ENCODE measurements at regions of chr2 and their contacts with region 1.

Region 1: DNA sequence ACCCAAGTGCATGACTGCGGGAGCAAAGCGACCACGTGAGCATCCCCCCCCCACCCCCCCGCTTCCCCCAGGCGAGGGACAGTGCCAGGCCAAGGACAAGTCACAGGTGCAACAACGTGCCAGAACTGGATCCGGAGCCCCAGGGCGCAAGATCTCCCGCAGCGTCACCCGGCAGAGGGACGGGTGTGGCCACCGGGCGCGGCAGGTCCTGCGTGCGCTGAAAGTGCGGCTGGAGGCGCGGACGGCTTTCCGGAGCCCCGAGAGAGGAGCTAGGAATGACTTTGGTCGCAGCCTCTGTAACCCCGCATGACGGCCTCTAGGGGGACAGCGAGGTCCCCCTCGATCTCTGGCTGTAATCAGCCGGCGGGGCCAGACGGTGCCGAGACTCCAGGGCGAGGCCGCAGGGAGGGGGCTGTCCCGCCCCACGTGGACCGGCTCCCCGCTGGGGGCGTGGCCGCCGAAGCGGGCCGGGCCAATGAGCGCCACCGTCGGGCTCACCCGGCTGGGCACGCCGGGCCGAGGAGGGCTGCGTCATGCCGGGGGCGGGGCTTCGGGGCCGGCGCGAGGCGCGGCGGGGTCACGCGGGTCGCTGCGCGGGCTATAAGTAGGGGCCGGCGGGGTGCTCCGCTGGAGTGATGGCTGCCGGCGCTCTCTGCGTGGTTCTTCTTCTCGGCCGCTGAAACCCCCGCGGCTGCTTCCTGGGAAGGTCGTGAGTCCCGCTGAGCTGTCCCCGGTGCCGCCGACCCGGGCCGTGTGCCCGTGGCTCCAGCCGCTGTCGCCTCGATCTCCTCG is at the start of gene SLC20A1:
- DNase-seq: peak; percentile 99
- H3K4me3 Mint-ChIP-seq: peak within 1 kb of the TSS; percentile 98
- H3K27ac Mint-ChIP-seq: peak within 1 kb of the TSS; percentile 92
- H3K4me1 Mint-ChIP-seq: peaks cover 72% of the 10 kb centered on the region
- H3K27me3 Mint-ChIP-seq: no peaks in the 10 kb centered on the region
- total RNA-seq, gene SLC20A1: 164 and 172 TPM in 2 replicates

Region 2: GRCh38 chr2:112254466-112255239 is 390.9 kb before region 1 on chr2 and contains the start of gene ZC3H8:
- intact Hi-C with region 1: loop called (anchors 10 kb)
- DNase-seq: peak; percentile 96
- H3K4me3 Mint-ChIP-seq: peak within 1 kb of the TSS; percentile 50
- H3K27ac Mint-ChIP-seq: peak within 1 kb of the TSS; percentile 91
- H3K4me1 Mint-ChIP-seq: peaks cover 27% of the 10 kb centered on the region
- H3K27me3 Mint-ChIP-seq: no peaks in the 10 kb centered on the region
- total RNA-seq, gene ZC3H8: 32.9 and 37.4 TPM in 2 replicates

Region 3: GRCh38 chr2:112542123-112542983 is 103.2 kb before region 1 on chr2 and contains the start of gene POLR1B:
- intact Hi-C with region 1: loop called (anchors 1 kb)
- DNase-seq: peak; percentile 77
- H3K4me3 Mint-ChIP-seq: no peak within 1 kb of the TSS
- H3K27ac Mint-ChIP-seq: no peak within 1 kb of the TSS
- H3K4me1 Mint-ChIP-seq: peaks cover 11% of the 10 kb centered on the region
- H3K27me3 Mint-ChIP-seq: no peaks in the 10 kb centered on the region
- total RNA-seq, gene POLR1B: 75.6 and 78.4 TPM in 2 replicates

Region 4: DNA sequence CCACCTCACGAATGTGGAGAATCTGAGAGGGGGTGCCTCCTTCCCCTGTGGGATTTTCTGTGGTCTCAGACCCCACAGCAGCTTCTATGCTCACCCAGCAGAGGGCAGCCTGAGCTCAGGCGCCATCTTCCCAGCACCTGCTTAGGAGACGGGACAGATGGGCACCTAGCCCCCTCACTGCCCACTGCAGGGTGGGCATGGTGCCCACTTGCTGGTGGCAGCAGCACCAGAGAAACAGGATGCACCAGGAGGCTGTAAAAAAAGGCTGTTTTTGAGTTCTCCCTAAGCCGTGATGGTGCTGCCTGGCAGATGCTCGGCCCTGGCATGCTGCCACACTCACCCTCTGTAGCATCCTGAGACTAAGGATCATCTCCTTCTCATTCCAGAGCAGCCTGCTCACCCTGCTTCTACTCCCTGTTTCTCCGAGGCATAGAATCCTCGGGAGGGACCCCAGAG is 18.9 kb before region 1 on chr2:
- intact Hi-C with region 1: loop called (anchors 1 kb)
- DNase-seq: peak; percentile 59
- H3K4me3 Mint-ChIP-seq: peak overlapping the region; percentile 57
- H3K27ac Mint-ChIP-seq: peak overlapping the region; percentile 40
- H3K4me1 Mint-ChIP-seq: peaks cover 79% of the 10 kb centered on the region
- H3K27me3 Mint-ChIP-seq: peaks cover 2% of the 10 kb centered on the region

Region 5: DNA sequence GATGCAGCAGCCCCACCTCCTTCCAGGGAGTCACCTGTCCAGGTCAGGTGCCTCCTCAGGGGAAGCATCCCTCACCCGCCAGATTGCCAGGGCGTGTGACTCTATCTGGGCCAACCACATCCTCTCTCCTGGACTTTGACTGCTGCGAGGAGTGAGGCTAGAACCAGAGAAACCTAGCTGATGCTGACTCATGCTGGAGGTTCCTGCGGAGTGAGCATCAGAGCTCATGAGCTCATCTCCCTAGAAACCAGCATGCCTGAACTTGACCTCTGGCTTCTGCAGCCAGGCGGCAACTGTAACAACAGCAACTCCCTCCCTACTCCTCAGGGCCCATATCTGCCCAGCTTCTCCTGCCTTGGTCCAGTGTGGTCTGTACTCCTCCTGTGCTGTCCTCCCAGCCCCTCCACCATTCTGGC is 47.0 kb after region 1 on chr2:
- intact Hi-C with region 1: loop called (anchors 1 kb)
- DNase-seq: peak; percentile 73
- H3K4me3 Mint-ChIP-seq: peak overlapping the region; percentile 47
- H3K27ac Mint-ChIP-seq: peak overlapping the region; percentile 89
- H3K4me1 Mint-ChIP-seq: peaks cover 32% of the 10 kb centered on the region
- H3K27me3 Mint-ChIP-seq: no peaks in the 10 kb centered on the region

Region 6: DNA sequence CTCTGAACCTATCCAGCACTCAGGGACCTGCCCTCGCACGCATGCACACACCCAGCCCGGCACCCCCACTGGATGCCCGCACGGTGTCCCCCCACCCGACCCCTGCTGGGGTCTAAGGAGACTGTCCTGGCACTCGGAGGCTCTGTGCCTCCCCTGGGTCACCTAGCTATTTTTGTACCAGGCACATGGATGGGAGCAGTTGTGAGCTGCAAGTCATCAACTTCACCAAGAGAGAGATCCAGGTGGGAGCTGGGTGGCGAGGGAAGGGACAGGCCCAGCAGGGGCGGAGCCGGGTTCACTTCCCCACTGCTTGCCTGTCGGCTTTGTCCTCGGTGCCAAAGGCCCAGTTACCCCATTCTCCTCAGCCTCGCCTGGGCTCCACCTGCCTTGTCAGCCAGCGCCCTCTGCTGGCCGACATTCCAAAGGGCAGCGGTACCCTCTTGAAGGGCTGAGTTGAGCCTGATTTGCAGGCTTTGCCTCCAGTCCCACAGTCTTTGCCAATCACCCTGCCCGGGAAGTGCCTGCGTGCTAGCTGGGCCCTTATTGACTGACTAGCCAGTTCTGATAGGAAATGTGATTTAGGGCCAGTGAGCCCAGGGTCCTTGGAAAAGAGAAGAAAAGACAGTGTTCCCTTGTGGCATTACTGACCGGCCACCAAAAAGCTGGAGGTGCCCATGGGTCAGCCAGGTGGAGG is 81.1 kb after region 1 on chr2:
- intact Hi-C with region 1: loop called (anchors 1 kb)
- DNase-seq: peak; percentile 86
- H3K4me3 Mint-ChIP-seq: no peak overlapping the region
- H3K27ac Mint-ChIP-seq: no peak overlapping the region
- H3K4me1 Mint-ChIP-seq: peaks cover 16% of the 10 kb centered on the region
- H3K27me3 Mint-ChIP-seq: no peaks in the 10 kb centered on the region

Region 7: GRCh38 chr2:113173542-113174395 is 528.3 kb after region 1 on chr2 and contains the start of gene PSD4:
- intact Hi-C with region 1: loop called (anchors 10 kb)
- DNase-seq: peak; percentile 86
- H3K4me3 Mint-ChIP-seq: peak within 1 kb of the TSS; percentile 89
- H3K27ac Mint-ChIP-seq: peak within 1 kb of the TSS; percentile 93
- H3K4me1 Mint-ChIP-seq: peaks cover 72% of the 10 kb centered on the region
- H3K27me3 Mint-ChIP-seq: peaks cover 3% of the 10 kb centered on the region
- total RNA-seq, gene PSD4: 249 and 257 TPM in 2 replicates

Measured in activated T-helper 1 cell treated with anti-CD3 and anti-CD28 coated beads, Interleukin-12 subunit alpha, Interleukin-12 subunit beta, Interleukin-2, Interleukin-4 antibody, amounts not matched to agents 30 ng/mL and 10 ng/mL and 1 ng/mL, durations not matched to agents 14 hours and 24 hours and 36 hours (primary cell).